GM18951 (cell line): ENCODE measurements at regions of chr1 and their contacts with region 1.

Region 1: GRCh38 chr1:108512239-108512981 is 47.5 kb upstream of the EEIG2 start:
- POLR2A ChIP-seq: no peak

Region 2: DNA sequence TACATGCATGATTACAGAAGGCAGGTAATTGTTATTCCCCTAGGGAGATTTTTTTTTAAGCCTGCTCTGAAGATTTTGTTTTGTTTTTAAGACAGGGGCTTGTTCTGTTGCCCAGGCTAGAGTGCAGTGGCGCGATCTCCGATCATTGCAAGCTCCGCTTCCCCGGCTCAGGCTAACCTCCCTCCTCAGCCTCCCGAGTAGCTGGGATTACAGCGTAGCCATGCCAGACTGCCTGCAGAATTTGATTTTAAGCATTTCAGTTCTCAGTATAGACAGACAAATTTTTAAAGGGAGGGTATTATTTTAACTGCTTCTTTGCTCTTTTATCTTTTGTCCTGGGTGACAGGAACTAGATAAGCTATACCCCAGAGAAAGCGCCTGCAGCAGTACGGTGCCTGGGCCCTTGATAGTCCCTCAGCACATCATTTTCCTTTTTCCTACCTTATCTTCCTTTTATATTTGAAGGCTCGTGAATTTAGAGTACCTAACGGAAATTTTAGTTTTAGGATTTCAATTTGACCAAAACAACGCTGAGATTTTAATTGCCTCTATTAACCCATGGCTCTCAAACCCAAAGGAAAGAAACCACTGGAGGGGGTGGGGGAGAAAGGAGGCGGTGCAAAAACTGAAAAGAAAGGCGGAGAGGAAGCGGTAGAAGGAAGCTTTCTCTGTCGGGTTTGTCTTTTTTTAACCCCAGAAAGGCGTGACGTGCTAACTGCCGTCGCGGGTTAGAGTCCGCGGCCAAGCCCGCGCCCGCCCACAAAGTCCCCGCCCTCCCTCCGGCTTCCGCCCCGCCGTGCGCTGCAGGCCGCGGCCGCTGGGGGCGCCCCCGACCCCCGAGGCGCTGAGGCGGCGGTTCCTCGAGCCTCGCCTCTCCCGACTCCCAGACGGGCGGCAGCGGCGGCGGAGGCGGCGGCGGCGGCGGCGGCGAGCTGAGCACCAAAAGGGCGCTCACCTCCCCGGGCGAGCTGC is 47.1 kb after region 1 on chr1 and contains the start of gene EEIG2:
- in situ Hi-C with region 1: loop called (anchors 10 kb)
- POLR2A ChIP-seq: peak; percentile 54

Region 3: GRCh38 chr1:108643492-108644335 is 131.3 kb after region 1 on chr1:
- in situ Hi-C with region 1: loop called (anchors 25 kb)
- POLR2A ChIP-seq: no peak

Region 4: GRCh38 chr1:109454497-109455133 is 942.2 kb after region 1 on chr1:
- in situ Hi-C with region 1: no loop called
- POLR2A ChIP-seq: no peak